Posterior cingulate gyrus (tissue), 11 donors: ENCODE measurements at regions of chr16 and their contacts with region 1.

Region 1: GRCh38 chr16:19666477-19666876 is 51.5 kb downstream of the KNOP1 start:
- DNase-seq: peak in 8 of 10 donors; percentile 48 to 91 (median 64)

Region 2: GRCh38 chr16:19753815-19754643 is 87.6 kb after region 1 on chr16:
- intact Hi-C with region 1: loop called (anchors 10 kb)
- DNase-seq: no peak